Calu3 (cell line): ENCODE measurements at regions of chr2 and their contacts with region 1.

Region 1: DNA sequence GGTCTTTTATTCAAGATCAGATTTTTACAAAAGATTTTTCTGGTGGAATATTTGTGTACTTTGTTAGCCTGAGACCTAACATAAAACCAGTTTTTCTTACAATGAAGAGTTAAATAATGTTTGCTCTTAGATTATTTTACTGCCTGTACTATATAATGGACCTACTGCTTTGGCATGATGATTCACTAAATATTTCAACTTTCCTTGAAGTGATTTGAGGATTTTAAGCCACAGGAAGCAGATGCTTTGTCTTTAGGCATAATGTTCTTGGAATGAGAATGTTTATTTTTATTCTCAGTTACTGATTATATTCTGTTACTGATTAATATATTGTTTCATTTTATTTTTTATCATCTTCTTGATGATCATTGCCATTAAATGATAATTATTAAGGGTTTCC is 175.3 kb upstream of the LRP1B start:
- DNase-seq: no peak
- H3K4me3 Mint-ChIP-seq: no peak overlapping the region
- H3K27ac Mint-ChIP-seq: no peak overlapping the region
- H3K4me1 Mint-ChIP-seq: peaks cover 33% of the 10 kb centered on the region
- H3K27me3 Mint-ChIP-seq: no peaks in the 10 kb centered on the region
- CTCF ChIP-seq: no peak

Region 2: GRCh38 chr2:142180820-142181535 is 125.1 kb before region 1 on chr2:
- CTCF ChIA-PET with region 1: no interaction called
- intact Hi-C with region 1: loop called (anchors 10 kb)
- DNase-seq: peak; percentile 56
- H3K4me3 Mint-ChIP-seq: no peak overlapping the region
- H3K27ac Mint-ChIP-seq: no peak overlapping the region
- H3K4me1 Mint-ChIP-seq: peaks cover 17% of the 10 kb centered on the region
- H3K27me3 Mint-ChIP-seq: no peaks in the 10 kb centered on the region
- CTCF ChIP-seq: peak; percentile 64

Region 3: DNA sequence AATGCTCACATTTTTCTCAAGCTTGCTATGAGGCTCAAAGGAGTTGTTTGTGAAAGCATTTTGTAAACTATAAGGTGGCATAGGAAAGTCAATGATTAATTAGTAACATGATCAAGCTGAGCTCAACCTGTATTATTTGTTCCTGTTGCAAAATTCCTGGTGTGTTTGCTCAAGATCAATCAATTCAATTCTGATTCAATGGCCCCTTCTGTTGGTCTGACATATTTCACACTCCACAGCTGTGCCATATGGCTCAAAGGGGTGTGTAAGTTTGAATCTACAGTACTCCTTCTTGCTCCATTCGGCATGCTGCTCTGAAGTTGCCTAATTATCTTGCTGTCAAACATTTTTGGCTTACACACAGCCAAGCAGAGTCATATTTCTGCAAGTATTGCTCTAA is 166.3 kb after region 1 on chr2:
- CTCF ChIA-PET with region 1: no interaction called
- intact Hi-C with region 1: loop called (anchors 1 kb)
- DNase-seq: peak; percentile 31
- H3K4me3 Mint-ChIP-seq: no peak overlapping the region
- H3K27ac Mint-ChIP-seq: no peak overlapping the region
- H3K4me1 Mint-ChIP-seq: peaks cover 29% of the 10 kb centered on the region
- H3K27me3 Mint-ChIP-seq: no peaks in the 10 kb centered on the region
- CTCF ChIP-seq: no peak